ENCODE measurements at regions of chr2 and their contacts with region 1.

Region 1: DNA sequence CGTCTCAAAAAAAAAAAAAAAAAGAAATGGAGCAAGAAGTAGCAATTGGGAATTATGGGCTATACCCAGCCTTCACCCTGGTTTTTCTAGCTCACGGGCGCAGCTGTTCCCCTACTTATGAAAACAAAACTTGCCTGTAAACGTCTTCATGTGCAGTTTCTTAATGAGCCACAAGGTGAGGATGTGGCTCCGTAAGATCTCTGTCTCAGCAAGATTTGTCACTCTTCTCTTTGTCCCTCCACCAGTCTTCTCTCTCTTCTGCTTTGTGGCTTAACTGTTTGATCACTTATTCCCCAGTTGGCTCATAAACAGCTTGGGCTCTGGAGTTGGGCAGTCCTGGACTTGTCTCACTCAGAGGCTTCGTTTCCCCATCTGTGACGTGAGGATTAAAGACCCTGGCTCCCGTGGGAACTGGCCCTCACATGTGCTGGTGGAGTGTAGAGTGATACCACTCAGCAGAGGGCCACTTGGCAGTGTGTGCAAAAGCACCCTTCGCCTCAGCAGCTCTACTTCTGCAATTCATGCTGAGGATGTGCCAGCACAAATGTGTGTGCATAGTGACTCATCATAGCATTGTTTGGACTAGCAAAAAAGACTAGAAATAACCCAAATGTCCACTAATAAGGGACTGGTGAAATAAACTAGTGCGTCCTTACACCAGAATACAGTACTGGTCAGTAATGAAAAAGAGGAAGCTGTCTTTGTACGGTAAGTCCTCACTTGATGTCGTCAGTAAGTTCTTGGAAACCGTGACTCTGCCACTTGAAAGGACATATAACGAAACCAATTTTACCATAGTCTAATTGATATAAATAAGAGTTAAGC is 8.7 kb downstream of the CEP68 start:
- DNase-seq: peak; percentile 86
- ATAC-seq: peak; percentile 89
- H3K4me3 ChIP-seq: peak overlapping the region; percentile 35; the same call in 1 of the 2 replicates
- H3K27ac ChIP-seq: peak overlapping the region; percentile 53; the same call in 1 of the 2 replicates
- H3K4me1 ChIP-seq: peaks cover 12% of the 10 kb centered on the region
- H3K27me3 ChIP-seq: no peaks in the 10 kb centered on the region
- CTCF ChIP-seq: peak; percentile 87 to 98 (median 97)
- EP300 ChIP-seq: no peak
- POLR2A ChIP-seq: 0 out of 2 replicates have a peak, but pooled peaks have one; percentile 29
- RAD21 ChIP-seq: peak; percentile 98

Region 2: DNA sequence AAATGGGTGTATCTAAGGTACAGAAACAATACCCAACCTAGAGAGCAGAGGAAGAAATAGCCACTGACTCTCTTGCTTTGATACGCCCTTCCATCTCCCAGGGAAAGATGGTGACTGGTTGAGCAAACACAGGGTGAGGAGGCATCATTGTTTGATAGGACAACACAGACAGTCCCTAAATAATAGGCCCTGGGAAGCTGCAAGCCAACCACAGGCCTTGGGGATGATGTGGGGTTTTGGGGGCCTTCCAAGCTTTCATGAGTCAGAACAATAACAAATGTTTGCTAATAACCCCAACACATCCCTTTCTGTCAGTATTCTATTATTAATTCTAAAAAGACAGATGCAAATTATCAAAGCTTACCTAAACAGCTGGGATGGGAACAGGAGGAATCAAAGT is 601.2 kb before region 1 on chr2:
- CTCF ChIA-PET with region 1: no interaction called
- POLR2A ChIA-PET with region 1: no interaction called
- RAD21 ChIA-PET with region 1: no interaction called
- SMC1A ChIA-PET with region 1: no interaction called
- in situ Hi-C with region 1: no loop called
- intact Hi-C with region 1: no loop called
- DNase-seq: no peak
- ATAC-seq: no peak
- H3K4me3 ChIP-seq: no peak overlapping the region
- H3K27ac ChIP-seq: no peak overlapping the region
- H3K4me1 ChIP-seq: no peaks in the 10 kb centered on the region
- H3K27me3 ChIP-seq: no peaks in the 10 kb centered on the region
- CTCF ChIP-seq: no peak
- EP300 ChIP-seq: no peak
- POLR2A ChIP-seq: no peak
- RAD21 ChIP-seq: no peak

Region 3: GRCh38 chr2:64523666-64524603 is 541.0 kb before region 1 on chr2 and contains the start of gene AFTPH:
- CTCF ChIA-PET with region 1: no interaction called
- POLR2A ChIA-PET with region 1: no interaction called
- RAD21 ChIA-PET with region 1: no interaction called
- SMC1A ChIA-PET with region 1: no interaction called
- in situ Hi-C with region 1: no loop called
- intact Hi-C with region 1: no loop called
- DNase-seq: peak; percentile 98
- ATAC-seq: peak; percentile 86
- H3K4me3 ChIP-seq: peak within 1 kb of the TSS; percentile 95
- H3K27ac ChIP-seq: peak within 1 kb of the TSS; percentile 94
- H3K4me1 ChIP-seq: peaks cover 11% of the 10 kb centered on the region
- H3K27me3 ChIP-seq: no peaks in the 10 kb centered on the region
- CTCF ChIP-seq: no peak
- EP300 ChIP-seq: peak in 1 of 2 experiments; percentile 53; a peak in 2 of 4 replicates
- POLR2A ChIP-seq: peak; percentile 84
- RAD21 ChIP-seq: no peak
- polyA plus RNA-seq, gene AFTPH: 25.6 to 38.7 TPM

Region 4: DNA sequence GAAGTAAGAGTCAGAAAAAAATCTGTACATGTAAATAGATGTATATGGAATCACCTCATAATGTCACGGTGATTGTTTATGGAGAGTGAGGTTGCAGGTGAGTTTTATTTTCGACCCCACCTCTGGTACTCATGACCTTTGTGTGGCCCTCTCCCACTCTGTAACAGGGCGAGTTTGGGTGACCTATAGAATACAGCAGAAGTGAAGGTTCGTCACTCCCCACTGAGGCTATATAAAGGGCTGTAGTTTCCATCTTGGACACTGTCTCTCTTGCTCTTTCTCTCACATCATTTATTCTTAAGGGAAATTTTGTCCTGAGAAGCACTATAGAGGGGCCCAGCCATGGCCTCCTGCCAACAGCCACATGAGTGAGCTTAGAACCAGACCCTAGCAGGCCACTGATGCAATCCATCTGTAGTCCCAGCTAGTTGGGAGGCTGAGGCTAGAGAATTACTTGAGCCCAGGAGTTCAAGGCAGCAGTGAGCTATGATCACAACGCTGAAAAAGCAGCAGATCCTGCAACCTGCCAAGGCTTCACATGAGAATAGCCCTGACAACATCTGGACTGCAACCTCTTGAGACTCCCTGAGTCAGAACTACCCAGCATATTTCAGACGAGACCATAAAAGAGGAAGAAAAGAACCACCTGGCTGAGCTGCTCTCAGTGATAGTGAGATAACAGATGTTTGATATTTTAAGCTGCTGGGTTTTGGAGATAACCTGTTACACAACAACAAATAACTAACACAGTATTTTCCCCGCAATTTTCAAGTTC is 150.0 kb before region 1 on chr2:
- CTCF ChIA-PET with region 1: interaction called, 20 read pairs
- POLR2A ChIA-PET with region 1: no interaction called
- RAD21 ChIA-PET with region 1: interaction called, 5 read pairs
- SMC1A ChIA-PET with region 1: interaction called, 7 read pairs
- in situ Hi-C with region 1: no loop called
- intact Hi-C with region 1: no loop called
- DNase-seq: peak; percentile 96
- ATAC-seq: peak; percentile 68
- H3K4me3 ChIP-seq: peak overlapping the region; percentile 41
- H3K27ac ChIP-seq: peak overlapping the region; percentile 81
- H3K4me1 ChIP-seq: peaks cover 62% of the 10 kb centered on the region
- H3K27me3 ChIP-seq: no peaks in the 10 kb centered on the region
- CTCF ChIP-seq: no peak
- EP300 ChIP-seq: peak; percentile 73 to 80; a peak in 3 of 4 replicates
- POLR2A ChIP-seq: peak; percentile 72
- RAD21 ChIP-seq: no peak

Region 5: DNA sequence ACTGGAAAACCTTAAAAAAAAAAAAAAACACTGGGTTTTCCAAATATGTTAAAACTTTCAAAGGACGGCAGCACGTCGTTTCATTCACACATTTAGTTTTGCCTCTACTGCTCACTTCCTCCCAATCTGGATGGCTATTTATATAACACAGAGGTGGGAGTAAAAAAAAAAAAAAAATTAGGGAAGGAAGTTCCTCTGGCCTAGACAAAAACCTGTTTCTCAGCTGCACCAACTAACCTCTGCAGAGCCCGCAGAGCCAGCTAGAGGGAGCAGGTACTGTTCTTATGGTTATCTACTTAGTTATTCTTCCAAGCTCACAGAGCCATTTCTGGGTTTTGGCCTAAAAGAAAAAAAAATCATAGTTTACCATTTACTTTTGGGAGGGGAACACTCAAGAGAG is 47.6 kb before region 1 on chr2:
- CTCF ChIA-PET with region 1: no interaction called
- POLR2A ChIA-PET with region 1: no interaction called
- RAD21 ChIA-PET with region 1: no interaction called
- SMC1A ChIA-PET with region 1: no interaction called
- in situ Hi-C with region 1: no loop called
- intact Hi-C with region 1: no loop called
- DNase-seq: no peak
- ATAC-seq: peak; percentile 72
- H3K4me3 ChIP-seq: no peak overlapping the region
- H3K27ac ChIP-seq: peak overlapping the region; percentile 38
- H3K4me1 ChIP-seq: peaks cover 24% of the 10 kb centered on the region
- H3K27me3 ChIP-seq: no peaks in the 10 kb centered on the region
- CTCF ChIP-seq: peak; percentile 46 to 53 (median 51); a peak in 5 of 6 replicates
- EP300 ChIP-seq: no peak
- POLR2A ChIP-seq: no peak
- RAD21 ChIP-seq: peak; percentile 52; the same call in 1 of the 2 replicates

Region 6: DNA sequence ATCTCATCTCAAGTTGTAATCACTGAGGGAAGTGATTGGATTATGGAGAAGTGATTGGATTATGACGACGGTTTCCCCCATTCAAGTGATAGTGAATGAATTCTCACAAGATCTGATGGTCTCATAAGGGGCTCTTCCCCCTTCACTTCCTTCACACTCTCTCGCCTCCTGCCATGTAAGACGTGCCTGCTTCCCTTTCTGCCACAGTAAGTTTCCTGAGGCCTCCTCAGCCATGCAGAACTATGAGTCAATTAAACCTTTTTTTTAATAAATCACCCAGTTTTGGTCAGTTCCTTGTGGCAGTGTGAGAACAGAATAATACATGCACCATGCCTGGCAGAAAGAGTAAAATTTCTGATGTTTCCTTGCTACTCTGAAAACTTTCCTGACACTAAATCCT is 27.9 kb after region 1 on chr2:
- CTCF ChIA-PET with region 1: interaction called, 18 read pairs
- POLR2A ChIA-PET with region 1: no interaction called
- RAD21 ChIA-PET with region 1: interaction called, 6 read pairs
- SMC1A ChIA-PET with region 1: interaction called, 5 read pairs
- in situ Hi-C with region 1: no loop called
- intact Hi-C with region 1: no loop called
- DNase-seq: no peak
- ATAC-seq: no peak
- H3K4me3 ChIP-seq: no peak overlapping the region
- H3K27ac ChIP-seq: no peak overlapping the region
- H3K4me1 ChIP-seq: no peaks in the 10 kb centered on the region
- H3K27me3 ChIP-seq: no peaks in the 10 kb centered on the region
- CTCF ChIP-seq: no peak
- EP300 ChIP-seq: no peak
- POLR2A ChIP-seq: no peak
- RAD21 ChIP-seq: no peak

Region 7: DNA sequence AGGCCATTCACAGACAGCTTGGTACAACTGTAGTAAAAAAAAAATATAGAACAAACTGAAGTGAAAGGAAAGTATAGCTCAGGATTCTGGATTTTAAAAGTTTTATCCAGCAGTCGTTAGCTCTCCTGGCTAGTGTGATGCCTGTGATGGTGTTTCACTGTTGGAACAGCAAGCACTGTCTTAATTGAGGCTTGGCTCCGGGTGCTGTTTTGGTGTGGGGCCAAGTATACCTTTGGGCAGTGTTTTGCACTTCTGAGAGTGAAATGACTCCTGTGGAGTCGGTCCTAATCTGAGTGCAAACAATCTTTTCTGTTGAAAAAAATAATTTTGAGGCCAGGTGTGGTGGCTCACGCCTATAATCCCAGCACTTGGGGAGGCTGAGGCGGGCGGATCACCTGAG is 93.6 kb after region 1 on chr2:
- CTCF ChIA-PET with region 1: interaction called, 20 read pairs
- POLR2A ChIA-PET with region 1: interaction called, 14 read pairs
- RAD21 ChIA-PET with region 1: interaction called, 7 read pairs
- SMC1A ChIA-PET with region 1: interaction called, 10 read pairs
- in situ Hi-C with region 1: loop called (anchors 10 kb)
- intact Hi-C with region 1: no loop called
- DNase-seq: no peak
- ATAC-seq: no peak
- H3K4me3 ChIP-seq: no peak overlapping the region
- H3K27ac ChIP-seq: no peak overlapping the region
- H3K4me1 ChIP-seq: 0 out of 2 replicates have a peak, but pooled peaks cover 3% of the 10 kb centered on the region
- H3K27me3 ChIP-seq: no peaks in the 10 kb centered on the region
- CTCF ChIP-seq: no peak
- EP300 ChIP-seq: no peak
- POLR2A ChIP-seq: no peak
- RAD21 ChIP-seq: no peak

Region 8: DNA sequence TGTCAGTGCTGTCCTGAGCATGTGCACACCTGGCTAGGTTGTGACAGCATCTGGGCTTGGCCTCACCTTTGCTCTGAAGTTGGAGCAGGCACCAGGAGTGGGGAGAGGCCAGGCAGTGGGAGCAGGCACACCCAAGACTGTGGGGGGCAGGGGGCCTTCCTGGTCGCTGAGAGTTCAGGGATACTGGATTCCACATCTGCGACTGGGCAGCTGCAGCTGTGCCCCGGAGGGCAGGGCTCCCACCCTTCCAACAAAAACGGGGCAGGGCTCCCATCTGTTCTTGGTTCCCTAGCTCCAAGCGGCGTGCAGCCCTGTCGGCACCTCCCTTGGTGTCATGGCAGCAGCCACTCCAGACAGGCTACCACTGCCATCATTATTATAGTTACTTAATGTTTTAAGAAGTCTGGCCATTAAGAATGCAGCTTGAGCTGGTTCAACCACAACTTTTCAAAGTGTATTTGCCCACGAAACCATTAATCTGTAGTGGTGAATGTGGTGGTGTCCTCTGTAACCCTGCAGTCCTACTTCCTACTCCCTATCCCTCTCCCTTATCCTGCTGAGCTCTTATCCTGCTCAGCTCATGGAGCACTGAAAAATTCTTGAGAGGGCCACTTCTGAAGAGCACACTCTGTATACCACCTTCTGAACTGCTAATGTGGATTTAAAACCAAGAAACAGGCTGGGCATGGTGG is 113.0 kb after region 1 on chr2:
- CTCF ChIA-PET with region 1: interaction called, 97 read pairs
- POLR2A ChIA-PET with region 1: no interaction called
- RAD21 ChIA-PET with region 1: interaction called, 4 read pairs
- SMC1A ChIA-PET with region 1: interaction called, 11 read pairs
- in situ Hi-C with region 1: no loop called
- intact Hi-C with region 1: no loop called
- DNase-seq: no peak
- ATAC-seq: no peak
- H3K4me3 ChIP-seq: no peak overlapping the region
- H3K27ac ChIP-seq: no peak overlapping the region
- H3K4me1 ChIP-seq: no peaks in the 10 kb centered on the region
- H3K27me3 ChIP-seq: no peaks in the 10 kb centered on the region; a peak in 1 of 4 replicates
- CTCF ChIP-seq: no peak
- EP300 ChIP-seq: no peak
- POLR2A ChIP-seq: no peak
- RAD21 ChIP-seq: no peak

Region 9: GRCh38 chr2:65432227-65433190 is 367.6 kb after region 1 on chr2 and contains the start of gene SPRED2:
- CTCF ChIA-PET with region 1: no interaction called
- POLR2A ChIA-PET with region 1: no interaction called
- RAD21 ChIA-PET with region 1: interaction called, 7 read pairs
- SMC1A ChIA-PET with region 1: no interaction called
- in situ Hi-C with region 1: no loop called
- intact Hi-C with region 1: loop called (anchors 10 kb)
- DNase-seq: no peak
- ATAC-seq: peak; percentile 38
- H3K4me3 ChIP-seq: peak within 1 kb of the TSS; percentile 80
- H3K27ac ChIP-seq: peak within 1 kb of the TSS; percentile 43
- H3K4me1 ChIP-seq: peaks cover 6% of the 10 kb centered on the region
- H3K27me3 ChIP-seq: no peaks in the 10 kb centered on the region
- CTCF ChIP-seq: no peak
- EP300 ChIP-seq: no peak
- POLR2A ChIP-seq: no peak; the same call in 1 of the 2 replicates
- RAD21 ChIP-seq: 0 out of 2 replicates have a peak, but pooled peaks have one; percentile 18
- polyA plus RNA-seq, gene SPRED2: 3.0 to 3.2 TPM

Measured in GM12878 (cell line).